ENCODE measurements at regions of chr1 and their contacts with region 1.

Region 1: DNA sequence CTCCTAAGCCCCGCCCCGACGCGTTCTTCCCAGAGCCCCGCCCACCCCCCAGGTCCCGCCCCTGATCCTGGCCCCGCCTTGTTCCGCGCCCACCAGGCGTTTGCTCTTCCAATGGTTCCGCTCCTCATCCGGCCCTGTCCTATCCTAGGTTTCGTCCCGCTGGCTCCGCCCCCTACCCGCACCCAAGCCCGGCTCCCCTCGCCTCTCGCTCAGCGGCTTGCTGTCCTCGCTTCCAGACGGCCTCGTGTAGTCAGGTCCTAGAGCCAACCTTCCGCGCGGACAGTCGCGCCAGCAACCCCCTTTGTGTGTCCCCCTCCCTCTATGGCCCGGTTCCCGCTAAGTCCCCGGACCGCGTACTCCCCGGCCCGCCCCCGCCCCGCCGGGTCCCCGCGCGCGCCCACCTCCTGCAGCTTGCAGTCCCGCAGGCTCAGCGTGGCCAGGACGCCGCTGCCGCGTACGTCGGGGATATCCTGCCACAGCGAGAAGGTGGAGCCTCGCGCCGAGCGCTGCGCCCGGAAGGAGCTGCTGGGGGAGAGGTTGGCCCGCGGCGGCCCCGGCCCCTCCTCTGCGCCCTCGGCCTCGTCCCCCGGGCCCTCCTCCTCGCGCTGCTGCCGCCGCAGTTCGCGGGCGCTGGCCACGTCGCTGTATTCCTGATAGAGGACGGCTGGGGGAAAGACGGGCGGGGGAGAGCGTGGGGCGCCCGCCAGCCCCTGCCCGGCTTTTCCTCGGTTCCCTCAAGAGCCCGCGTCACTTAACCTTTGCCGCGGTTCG is 5.7 kb downstream of the ARHGEF19 start:
- DNase-seq: peak; percentile 85 to 98 (median 91)
- ATAC-seq: peak; percentile 88
- H3K4me3 ChIP-seq: peak overlapping the region; percentile 75
- H3K4me3 Mint-ChIP-seq: peak overlapping the region; percentile 93
- H3K27ac ChIP-seq: peak overlapping the region; percentile 60 to 86
- H3K27ac Mint-ChIP-seq: peak overlapping the region; percentile 95
- H3K4me1 ChIP-seq: peaks cover 25% of the 10 kb centered on the region
- H3K4me1 Mint-ChIP-seq: peaks cover 12% of the 10 kb centered on the region
- H3K27me3 ChIP-seq: no peaks in the 10 kb centered on the region
- H3K27me3 Mint-ChIP-seq: no peaks in the 10 kb centered on the region
- CTCF ChIP-seq: no peak

Region 2: GRCh38 chr1:16236511-16237342 is 30.0 kb after region 1 on chr1 and contains the start of gene CPLANE2:
- CTCF ChIA-PET with region 1: interaction called, 3 read pairs
- POLR2A ChIA-PET with region 1: interaction called, 21 read pairs
- intact Hi-C with region 1: loop called (anchors 1 to 2 kb)
- DNase-seq: peak; percentile 93 to 98 (median 95)
- ATAC-seq: peak; percentile 78
- H3K4me3 ChIP-seq: peak within 1 kb of the TSS; percentile 85
- H3K4me3 Mint-ChIP-seq: peak within 1 kb of the TSS; percentile 93
- H3K27ac ChIP-seq: peak within 1 kb of the TSS; percentile 66 to 84
- H3K27ac Mint-ChIP-seq: peak within 1 kb of the TSS; percentile 84
- H3K4me1 ChIP-seq: peaks cover 23% of the 10 kb centered on the region
- H3K4me1 Mint-ChIP-seq: peaks cover 22% of the 10 kb centered on the region
- H3K27me3 ChIP-seq: no peaks in the 10 kb centered on the region
- H3K27me3 Mint-ChIP-seq: no peaks in the 10 kb centered on the region
- CTCF ChIP-seq: peak; percentile 11
- total RNA-seq, gene CPLANE2: 5.3 to 8.4 TPM